Activated CD4-positive, alpha-beta memory T cell treated with anti-CD3 and anti-CD28 coated beads for 36 hours (primary cell): ENCODE measurements at regions of chr5 and their contacts with region 1.

Region 1: DNA sequence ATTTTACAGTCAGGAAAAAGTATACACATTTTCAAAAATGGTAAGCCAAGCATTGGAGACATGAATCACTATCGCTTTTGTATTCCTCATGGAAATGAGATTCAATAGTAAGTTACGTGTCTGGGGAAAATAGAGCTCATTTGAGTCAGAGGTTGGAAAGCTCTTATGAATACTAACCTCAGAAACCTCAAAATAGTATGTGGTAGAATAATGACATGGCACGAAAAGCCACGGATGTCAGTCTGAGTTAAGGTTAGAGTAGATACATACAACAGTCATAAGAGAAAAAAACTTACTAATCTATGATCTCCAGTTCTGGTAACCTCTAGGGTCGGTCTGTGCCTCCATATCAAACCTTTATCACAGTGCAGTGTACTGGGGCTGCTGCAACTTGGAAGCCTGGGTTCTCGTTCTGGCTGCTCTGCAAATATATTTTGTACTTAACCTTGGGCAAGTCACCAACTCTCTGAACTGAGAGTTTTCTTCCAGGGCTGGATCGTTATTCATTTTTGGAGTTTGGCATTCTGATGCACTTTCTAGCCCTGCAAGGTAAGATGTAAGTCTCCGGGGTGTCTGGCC is 31.8 kb downstream of the MAP1B start:
- DNase-seq: peak; percentile 35
- H3K4me3 Mint-ChIP-seq: no peak overlapping the region
- H3K27ac Mint-ChIP-seq: no peak overlapping the region
- H3K4me1 Mint-ChIP-seq: peaks cover 18% of the 10 kb centered on the region
- H3K27me3 Mint-ChIP-seq: peaks cover 39% of the 10 kb centered on the region

Region 2: GRCh38 chr5:72093217-72093616 is 45.8 kb before region 1 on chr5:
- CTCF ChIA-PET with region 1: no interaction called
- POLR2A ChIA-PET with region 1: no interaction called
- intact Hi-C with region 1: loop called (anchors 1 kb)
- DNase-seq: no peak
- H3K4me3 Mint-ChIP-seq: no peak overlapping the region
- H3K27ac Mint-ChIP-seq: no peak overlapping the region
- H3K4me1 Mint-ChIP-seq: peaks cover 11% of the 10 kb centered on the region
- H3K27me3 Mint-ChIP-seq: peaks cover 29% of the 10 kb centered on the region

Region 3: DNA sequence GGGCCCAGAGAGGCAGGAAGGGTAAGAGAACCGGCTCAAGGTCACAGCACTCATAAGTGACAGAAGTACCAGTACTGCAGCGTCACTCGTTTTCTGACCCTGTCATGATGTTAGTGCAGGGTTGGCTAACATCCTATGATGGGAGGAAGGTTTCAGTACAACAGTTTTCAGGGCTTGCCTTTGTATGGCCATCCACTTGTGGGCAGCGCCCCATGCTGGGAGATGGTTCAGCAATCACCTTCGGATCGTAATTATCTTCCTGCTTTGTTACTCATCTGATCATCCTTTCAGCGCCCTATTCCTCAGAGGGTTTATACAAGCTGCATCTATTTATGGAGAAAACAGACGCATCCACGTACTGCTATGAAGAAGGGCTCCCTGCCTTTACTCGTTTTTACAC is 29.4 kb before region 1 on chr5:
- CTCF ChIA-PET with region 1: no interaction called
- POLR2A ChIA-PET with region 1: no interaction called
- intact Hi-C with region 1: no loop called
- DNase-seq: no peak
- H3K4me3 Mint-ChIP-seq: no peak overlapping the region
- H3K27ac Mint-ChIP-seq: no peak overlapping the region
- H3K4me1 Mint-ChIP-seq: peaks cover 8% of the 10 kb centered on the region
- H3K27me3 Mint-ChIP-seq: peaks cover 52% of the 10 kb centered on the region

Region 4: DNA sequence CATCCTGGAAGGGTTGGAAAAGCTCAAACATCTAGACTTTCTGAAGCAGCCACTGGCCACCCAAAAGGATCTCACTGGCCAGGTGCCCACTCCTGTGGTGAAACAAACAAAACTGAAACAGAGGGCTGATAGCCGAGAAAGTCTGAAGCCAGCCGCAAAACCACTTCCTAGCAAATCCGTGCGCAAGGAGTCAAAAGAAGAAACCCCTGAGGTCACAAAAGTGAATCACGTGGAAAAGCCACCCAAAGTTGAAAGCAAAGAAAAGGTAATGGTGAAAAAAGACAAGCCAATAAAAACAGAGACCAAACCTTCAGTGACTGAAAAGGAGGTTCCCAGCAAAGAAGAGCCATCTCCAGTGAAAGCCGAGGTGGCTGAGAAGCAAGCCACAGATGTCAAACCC is 55.8 kb after region 1 on chr5:
- CTCF ChIA-PET with region 1: interaction called, 3 read pairs
- POLR2A ChIA-PET with region 1: no interaction called
- intact Hi-C with region 1: loop called (anchors 1 kb)
- DNase-seq: peak; percentile 78
- H3K4me3 Mint-ChIP-seq: no peak overlapping the region
- H3K27ac Mint-ChIP-seq: peak overlapping the region; percentile 16
- H3K4me1 Mint-ChIP-seq: peaks cover 15% of the 10 kb centered on the region
- H3K27me3 Mint-ChIP-seq: peaks cover 66% of the 10 kb centered on the region

Region 5: DNA sequence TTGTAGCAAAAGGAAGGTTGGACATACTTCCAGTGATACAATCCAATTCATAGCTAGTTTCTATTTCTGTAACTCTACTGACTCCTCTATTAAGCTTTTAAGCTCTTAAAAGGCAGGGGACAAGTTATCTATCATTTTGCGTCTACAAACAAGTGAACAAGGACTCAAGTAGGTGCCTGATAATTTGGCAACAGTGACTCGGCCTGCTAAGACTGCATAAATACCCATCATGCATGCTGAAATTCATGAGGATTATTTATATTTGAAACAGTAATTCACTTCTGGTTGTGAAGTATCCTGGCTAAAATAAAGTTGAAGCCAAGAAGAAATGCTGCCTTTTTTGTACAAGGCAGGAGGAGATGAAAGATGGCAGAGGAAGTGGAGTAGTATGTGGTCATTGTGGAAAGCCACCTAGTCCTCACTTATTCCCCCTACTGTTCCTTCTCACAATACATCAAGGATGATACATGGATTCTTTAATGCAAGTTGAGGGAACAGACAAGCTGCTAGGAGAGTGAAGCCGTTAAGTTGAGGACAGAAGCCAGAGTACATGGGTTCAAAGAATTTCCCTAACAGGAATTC is 107.0 kb after region 1 on chr5:
- CTCF ChIA-PET with region 1: no interaction called
- POLR2A ChIA-PET with region 1: no interaction called
- intact Hi-C with region 1: loop called (anchors 2 kb)
- DNase-seq: no peak
- H3K4me3 Mint-ChIP-seq: no peak overlapping the region
- H3K27ac Mint-ChIP-seq: no peak overlapping the region
- H3K4me1 Mint-ChIP-seq: peaks cover 14% of the 10 kb centered on the region
- H3K27me3 Mint-ChIP-seq: no peaks in the 10 kb centered on the region

Region 6: DNA sequence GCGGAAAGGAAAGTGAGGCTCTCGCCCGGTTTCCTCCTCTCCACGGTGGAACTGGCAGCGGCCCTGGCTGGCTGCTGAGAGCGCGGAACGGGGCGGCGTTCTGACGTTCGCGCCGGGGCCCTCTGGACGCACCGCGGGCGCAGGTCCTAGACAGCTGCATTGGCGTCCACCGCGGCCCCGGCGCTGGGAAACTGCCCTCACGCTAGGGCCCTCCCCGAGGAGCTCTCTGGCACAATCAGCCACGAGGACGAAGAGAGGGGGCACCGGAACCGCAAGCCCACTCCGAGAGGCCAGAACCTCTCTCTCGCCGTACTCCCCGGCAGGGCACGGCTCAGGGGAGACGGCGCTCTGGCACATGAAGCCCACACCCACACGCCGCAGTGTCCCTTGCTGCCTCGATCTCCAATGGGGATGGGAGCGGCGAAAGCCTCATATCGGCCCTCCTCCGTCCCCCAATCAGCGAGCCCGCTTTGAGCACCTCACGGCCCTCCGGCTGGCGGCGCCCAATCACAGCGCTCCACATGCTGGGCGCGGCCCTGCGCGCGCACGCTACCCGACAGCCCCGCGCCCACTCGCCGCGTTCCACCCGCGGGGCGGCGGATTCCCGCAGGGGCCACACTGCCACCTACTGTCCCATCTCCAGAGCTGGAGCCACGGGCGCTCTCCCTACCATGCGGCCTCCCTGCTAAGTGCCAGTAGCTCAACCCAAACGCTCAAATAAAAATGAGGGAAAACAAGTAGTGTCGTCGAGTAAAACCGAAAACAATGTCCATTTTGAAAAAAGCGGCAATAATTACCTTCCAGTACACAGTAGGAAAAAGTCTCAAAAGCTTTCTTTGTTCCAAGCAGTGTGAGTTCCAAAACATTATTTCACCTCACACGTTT is 169.2 kb after region 1 on chr5:
- CTCF ChIA-PET with region 1: interaction called, 9 read pairs
- POLR2A ChIA-PET with region 1: no interaction called
- intact Hi-C with region 1: loop called (anchors 1 kb)
- DNase-seq: peak; percentile 97
- H3K4me3 Mint-ChIP-seq: peak overlapping the region; percentile 89
- H3K27ac Mint-ChIP-seq: peak overlapping the region; percentile 87
- H3K4me1 Mint-ChIP-seq: peaks cover 23% of the 10 kb centered on the region
- H3K27me3 Mint-ChIP-seq: no peaks in the 10 kb centered on the region